Pancreas (tissue), 10 donors: ENCODE measurements at regions of chr11 and their contacts with region 1.

Region 1: GRCh38 chr11:131867457-131868257 is 497.2 kb downstream of the NTM start:
- DNase-seq: peak; percentile 33 to 79 (median 61)
- ATAC-seq: peak; percentile 50 to 90 (median 85)
- H3K4me3 ChIP-seq: no peak overlapping the region
- H3K27ac ChIP-seq: no peak overlapping the region
- H3K4me1 ChIP-seq: no peaks in the 10 kb centered on the region
- H3K27me3 ChIP-seq: no peaks in the 10 kb centered on the region
- CTCF ChIP-seq: peak; percentile 31 to 63 (median 50)

Region 2: DNA sequence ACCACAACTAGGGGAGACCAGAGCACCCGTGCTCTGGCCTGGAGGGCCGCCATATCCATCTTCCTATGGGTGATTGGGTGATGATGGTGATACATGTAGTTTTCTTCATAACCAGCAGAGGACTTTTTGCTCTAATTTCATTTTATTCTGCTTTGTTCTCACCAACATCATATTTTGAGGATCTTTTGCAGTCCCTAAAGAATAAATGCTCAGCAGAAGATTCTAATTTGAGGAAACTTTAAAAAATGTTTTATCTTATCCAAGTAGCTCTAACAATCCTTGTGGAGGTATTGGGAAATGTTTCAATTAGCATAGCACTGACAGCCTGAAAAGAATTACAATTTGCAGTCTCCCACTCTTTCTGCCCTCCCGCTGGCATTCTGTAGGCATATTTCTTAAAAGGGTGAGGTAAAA is 46.7 kb after region 1 on chr11:
- intact Hi-C with region 1: no loop called
- DNase-seq: no peak
- ATAC-seq: no peak
- H3K4me3 ChIP-seq: no peak overlapping the region
- H3K27ac ChIP-seq: no peak overlapping the region
- H3K4me1 ChIP-seq: peaks cover 0 to 5% (median 0%) of the 10 kb centered on the region in 3 donors
- H3K27me3 ChIP-seq: peaks cover 0 to 10% (median 0%) of the 10 kb centered on the region in 4 donors
- CTCF ChIP-seq: no peak

Region 3: GRCh38 chr11:132028380-132029240 is 161.0 kb after region 1 on chr11:
- intact Hi-C with region 1: loop called in 2 of 3 experiments (anchors 5 to 10 kb)
- DNase-seq: peak in 1 of 6 donors; percentile 45
- ATAC-seq: peak; percentile 67 to 73 (median 70)
- H3K4me3 ChIP-seq: no peak overlapping the region
- H3K27ac ChIP-seq: no peak overlapping the region
- H3K4me1 ChIP-seq: no peaks in the 10 kb centered on the region
- H3K27me3 ChIP-seq: no peaks in the 10 kb centered on the region
- CTCF ChIP-seq: peak in 3 of 4 donors; percentile 39 to 45 (median 40)